ENCODE measurements at regions of chr4 and their contacts with region 1.

Region 1: DNA sequence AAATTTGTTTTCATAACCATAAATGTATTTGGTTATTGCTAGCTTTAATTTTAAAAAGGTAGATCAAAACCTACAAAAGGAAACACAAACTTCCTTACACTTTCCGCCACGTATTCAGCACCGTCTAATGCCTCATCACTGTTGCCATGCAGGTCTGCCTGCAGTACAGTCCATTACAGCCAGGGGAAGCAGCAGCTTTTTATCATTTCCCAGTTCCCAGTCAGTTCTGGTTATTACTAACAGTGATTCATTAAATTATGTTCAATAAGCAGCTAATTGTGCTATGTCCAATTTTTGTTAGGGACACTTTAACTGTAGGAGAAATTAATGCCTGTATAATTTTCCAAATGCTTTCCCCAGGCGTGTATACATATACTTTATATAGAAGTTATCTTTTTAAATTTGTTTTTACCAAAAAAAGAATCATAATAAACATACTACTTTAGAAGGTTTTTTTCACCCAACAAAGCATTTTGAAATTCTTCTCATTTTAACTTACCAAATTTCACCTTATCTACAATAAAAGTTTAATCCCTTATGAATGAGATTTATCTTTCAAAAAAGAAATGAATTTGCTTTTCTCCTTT is 93.3 kb downstream of the ANXA3 start:
- DNase-seq: peak in 1 of 2 donors; percentile 70
- ATAC-seq: peak; percentile 78 to 88 (median 87)
- H3K4me3 ChIP-seq: no peak overlapping the region
- H3K4me3 Mint-ChIP-seq: no peak overlapping the region
- H3K27ac ChIP-seq: no peak overlapping the region
- H3K27ac Mint-ChIP-seq: no peak overlapping the region
- H3K4me1 ChIP-seq: peaks cover 4% of the 10 kb centered on the region
- H3K4me1 Mint-ChIP-seq: no peaks in the 10 kb centered on the region
- H3K27me3 ChIP-seq: no peaks in the 10 kb centered on the region
- H3K27me3 Mint-ChIP-seq: peaks cover 0 to 2% of the 10 kb centered on the region in 2 donors
- CTCF ChIP-seq: peak; percentile 70

Region 2: DNA sequence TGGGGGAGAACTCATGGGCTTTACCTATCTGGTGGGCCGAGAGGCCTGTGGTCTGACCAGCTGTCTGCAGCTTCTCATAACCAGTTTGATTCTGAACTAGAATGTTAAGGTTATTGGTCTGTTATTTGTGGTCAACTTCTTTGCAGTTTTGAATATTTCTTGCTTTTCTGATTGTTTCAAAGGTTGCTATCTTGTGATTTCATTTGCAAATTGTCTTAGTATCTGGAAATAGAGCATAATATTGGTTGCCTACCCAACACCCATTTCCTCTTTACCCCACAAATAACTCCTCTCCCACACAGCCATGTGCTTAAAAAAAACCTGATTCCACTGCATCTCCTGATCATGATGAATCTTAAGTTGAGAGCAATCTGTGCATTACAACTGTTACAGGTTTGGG is 92.2 kb after region 1 on chr4:
- intact Hi-C with region 1: no loop called
- DNase-seq: no peak
- ATAC-seq: no peak
- H3K4me3 ChIP-seq: no peak overlapping the region
- H3K4me3 Mint-ChIP-seq: no peak overlapping the region
- H3K27ac ChIP-seq: no peak overlapping the region
- H3K27ac Mint-ChIP-seq: no peak overlapping the region
- H3K4me1 ChIP-seq: no peaks in the 10 kb centered on the region
- H3K4me1 Mint-ChIP-seq: no peaks in the 10 kb centered on the region
- H3K27me3 ChIP-seq: no peaks in the 10 kb centered on the region
- H3K27me3 Mint-ChIP-seq: no peaks in the 10 kb centered on the region
- CTCF ChIP-seq: no peak

Region 3: DNA sequence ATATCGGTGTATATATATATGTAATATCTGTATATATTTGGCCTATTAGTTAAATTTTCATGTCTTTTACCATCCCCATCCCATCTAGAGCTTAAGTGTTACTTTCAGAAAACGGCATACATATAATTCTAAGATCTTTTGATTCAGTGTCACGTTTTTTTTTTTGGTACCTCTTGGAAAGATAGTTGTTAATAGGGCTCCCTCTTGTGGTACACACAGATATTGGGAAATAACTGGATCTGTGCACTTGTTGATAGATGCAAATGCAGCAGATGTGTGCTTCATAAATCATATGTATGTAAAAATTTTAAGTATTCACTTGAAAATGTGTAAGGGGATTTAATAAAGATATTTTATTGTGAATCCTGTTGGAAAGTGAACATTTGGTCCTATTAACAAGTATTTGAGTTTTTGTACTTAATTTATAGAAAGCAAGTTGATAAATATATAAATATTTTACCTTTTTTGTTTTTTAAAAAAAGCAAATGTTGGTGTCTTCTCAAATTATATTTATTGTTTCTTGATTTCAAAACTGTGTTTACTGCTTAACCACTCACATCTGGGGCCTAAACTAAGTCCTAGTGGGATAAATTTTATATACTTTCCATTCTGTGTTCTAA is 219.7 kb after region 1 on chr4:
- intact Hi-C with region 1: loop called (anchors 10 kb)
- DNase-seq: peak in 1 of 2 donors; percentile 80
- ATAC-seq: peak; percentile 66 to 78 (median 71)
- H3K4me3 ChIP-seq: no peak overlapping the region
- H3K4me3 Mint-ChIP-seq: no peak overlapping the region
- H3K27ac ChIP-seq: no peak overlapping the region
- H3K27ac Mint-ChIP-seq: no peak overlapping the region
- H3K4me1 ChIP-seq: no peaks in the 10 kb centered on the region
- H3K4me1 Mint-ChIP-seq: peaks cover 5 to 6% of the 10 kb centered on the region in 2 donors
- H3K27me3 ChIP-seq: no peaks in the 10 kb centered on the region
- H3K27me3 Mint-ChIP-seq: no peaks in the 10 kb centered on the region
- CTCF ChIP-seq: peak; percentile 80

Measured in natural killer cell (primary cell).